ENCODE measurements at regions of chr11 and their contacts with region 1.

Region 1: GRCh38 chr11:62880803-62881578 is at the start of gene SLC3A2:
- DNase-seq: peak; percentile 86 to 90
- ATAC-seq: peak; percentile 76 to 80
- H3K4me3 ChIP-seq: peak within 1 kb of the TSS; percentile 78 to 99 (median 97)
- H3K27ac ChIP-seq: peak within 1 kb of the TSS; percentile 96 to 100 (median 98)
- H3K4me1 ChIP-seq: peaks cover 36 to 39% of the 10 kb centered on the region in 2 donors
- H3K27me3 ChIP-seq: no peaks in the 10 kb centered on the region
- CTCF ChIP-seq: peak; percentile 43 to 81 (median 61)
- POLR2A ChIP-seq: peak; percentile 99
- total RNA-seq, gene SLC3A2: 158 to 278 (median 189) TPM

Region 2: GRCh38 chr11:61967116-61967923 is 913.7 kb before region 1 on chr11 and contains the start of gene FTH1:
- in situ Hi-C with region 1: no loop called
- intact Hi-C with region 1: loop called (anchors 2 kb)
- DNase-seq: peak; percentile 89 to 90
- ATAC-seq: peak; percentile 52 to 63
- H3K4me3 ChIP-seq: peak within 1 kb of the TSS; percentile 83 to 94 (median 91)
- H3K27ac ChIP-seq: peak within 1 kb of the TSS; percentile 93 to 100 (median 99)
- H3K4me1 ChIP-seq: peaks cover 55 to 63% of the 10 kb centered on the region in 2 donors
- H3K27me3 ChIP-seq: no peaks in the 10 kb centered on the region
- CTCF ChIP-seq: no peak
- POLR2A ChIP-seq: peak; percentile 100
- total RNA-seq, gene FTH1: 1,340 to 3,366 (median 1,705) TPM

Region 3: GRCh38 chr11:62787005-62787759 is 93.8 kb before region 1 on chr11 and contains the start of gene TMEM179B:
- in situ Hi-C with region 1: no loop called
- intact Hi-C with region 1: loop called (anchors 1 kb)
- DNase-seq: peak; percentile 98 to 99
- ATAC-seq: peak; percentile 90 to 94
- H3K4me3 ChIP-seq: peak within 1 kb of the TSS; percentile 84 to 97 (median 93)
- H3K27ac ChIP-seq: peak within 1 kb of the TSS; percentile 85 to 99 (median 93)
- H3K4me1 ChIP-seq: peaks cover 35 to 39% of the 10 kb centered on the region in 2 donors
- H3K27me3 ChIP-seq: no peaks in the 10 kb centered on the region
- CTCF ChIP-seq: peak in 3 of 5 experiments; percentile 2 to 54 (median 36)
- POLR2A ChIP-seq: peak; percentile 96 to 97
- total RNA-seq, gene TMEM179B: 26.3 to 52.5 (median 44.3) TPM

Region 4: DNA sequence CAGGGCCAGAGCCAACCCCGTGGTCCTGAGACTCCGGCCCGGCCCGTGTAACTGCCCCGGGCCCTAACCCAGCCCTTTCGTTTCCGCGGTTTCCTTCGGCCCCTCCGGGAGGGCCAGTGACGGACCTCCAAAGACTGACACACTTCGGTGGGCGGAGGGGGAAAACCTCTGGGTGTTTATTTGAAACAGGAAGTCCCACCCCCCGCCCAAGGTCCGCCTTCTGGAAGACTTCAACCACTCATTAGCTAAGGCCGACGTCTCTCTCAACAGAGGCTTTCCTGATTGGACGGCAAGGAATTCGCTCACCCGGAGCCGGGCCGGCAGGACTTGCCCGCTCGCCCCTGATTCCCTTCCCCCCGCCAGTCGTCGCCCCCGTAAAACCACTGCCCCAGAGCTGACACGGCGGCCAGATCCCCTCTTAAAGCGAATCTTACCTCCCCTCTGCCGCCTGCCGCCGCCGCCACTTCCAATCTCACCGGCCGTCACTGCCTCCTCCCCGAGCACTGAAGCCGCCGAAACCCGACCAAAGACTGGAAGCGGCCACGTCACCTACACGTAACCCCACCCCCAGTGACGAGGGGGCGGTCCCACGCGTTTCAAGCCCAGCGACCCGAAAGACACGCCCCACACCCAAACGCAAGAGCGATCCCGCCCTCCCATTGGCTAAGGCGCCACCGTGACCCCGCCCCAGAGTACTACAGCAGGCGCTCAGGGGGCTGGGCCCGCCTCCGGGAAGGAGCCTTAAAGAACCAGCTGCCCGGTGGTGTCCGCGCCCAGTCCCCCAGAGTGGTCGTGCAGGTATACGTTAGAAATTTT is 49.3 kb before region 1 on chr11 and contains the start of gene STX5:
- in situ Hi-C with region 1: no loop called
- intact Hi-C with region 1: loop called (anchors 2 kb)
- DNase-seq: peak; percentile 99
- ATAC-seq: peak; percentile 95 to 96
- H3K4me3 ChIP-seq: peak within 1 kb of the TSS; percentile 83 to 100 (median 94)
- H3K27ac ChIP-seq: peak within 1 kb of the TSS; percentile 92 to 100 (median 96)
- H3K4me1 ChIP-seq: peaks cover 27 to 32% of the 10 kb centered on the region in 2 donors
- H3K27me3 ChIP-seq: no peaks in the 10 kb centered on the region
- CTCF ChIP-seq: no peak
- POLR2A ChIP-seq: peak; percentile 89 to 90
- total RNA-seq, gene STX5: 16.2 to 26.0 (median 24.9) TPM

Region 5: GRCh38 chr11:62855571-62856332 is 25.2 kb before region 1 on chr11:
- in situ Hi-C with region 1: no loop called
- intact Hi-C with region 1: loop called (anchors 1 kb)
- DNase-seq: peak; percentile 95 to 96
- ATAC-seq: peak; percentile 99
- H3K4me3 ChIP-seq: peak overlapping the region; percentile 70 to 90 (median 80)
- H3K27ac ChIP-seq: peak overlapping the region; percentile 84 to 88 (median 86)
- H3K4me1 ChIP-seq: peaks cover 20 to 21% of the 10 kb centered on the region in 2 donors
- H3K27me3 ChIP-seq: no peaks in the 10 kb centered on the region
- CTCF ChIP-seq: peak in 1 of 5 experiments; percentile 13
- POLR2A ChIP-seq: peak; percentile 93 to 96

Region 6: GRCh38 chr11:62974848-62975522 is 94.0 kb after region 1 on chr11:
- in situ Hi-C with region 1: no loop called
- intact Hi-C with region 1: no loop called
- DNase-seq: no peak
- ATAC-seq: no peak
- H3K4me3 ChIP-seq: no peak overlapping the region
- H3K27ac ChIP-seq: no peak overlapping the region
- H3K4me1 ChIP-seq: peaks cover 3 to 4% of the 10 kb centered on the region in 2 donors
- H3K27me3 ChIP-seq: no peaks in the 10 kb centered on the region
- CTCF ChIP-seq: peak in 2 of 5 experiments; percentile 22 to 33
- POLR2A ChIP-seq: no peak